ENCODE measurements at regions of chrX and their contacts with region 1.

Region 1: GRCh38 chrX:29090811-29091210 is 503.6 kb downstream of the IL1RAPL1 start:
- DNase-seq: no peak
- H3K4me3 ChIP-seq: no peak overlapping the region
- H3K27ac ChIP-seq: no peak overlapping the region
- H3K4me1 ChIP-seq: no peaks in the 10 kb centered on the region
- H3K27me3 ChIP-seq: no peaks in the 10 kb centered on the region
- CTCF ChIP-seq: no peak

Region 2: DNA sequence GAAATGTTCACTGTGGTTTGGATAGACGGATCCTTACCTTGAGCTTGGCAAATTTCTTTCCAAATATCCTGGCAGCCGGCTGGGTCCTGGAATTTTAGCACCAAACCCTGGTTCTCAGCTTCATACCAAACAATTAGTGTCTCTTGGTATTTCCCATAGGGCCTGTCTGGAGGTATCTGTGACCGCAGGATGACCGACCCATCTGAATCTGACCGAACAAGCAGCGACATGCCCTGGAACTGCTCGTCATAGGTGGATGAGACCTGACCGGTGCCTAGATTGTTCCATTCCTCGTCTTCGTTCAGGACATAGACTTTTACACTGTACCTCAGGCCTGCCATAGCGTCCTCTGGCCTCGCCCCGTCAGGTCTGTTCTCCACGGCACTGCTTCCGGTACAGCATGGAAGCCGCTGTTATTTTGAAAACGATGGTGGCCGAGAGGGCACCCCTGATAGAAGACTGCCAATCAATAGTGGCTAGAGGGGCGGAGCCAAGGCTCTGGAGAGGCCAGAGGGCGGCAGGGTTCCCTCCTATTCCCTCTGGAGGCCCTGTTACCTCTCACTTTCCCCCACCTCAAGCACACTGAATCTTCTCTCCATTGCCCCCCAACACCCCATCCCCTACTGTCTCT is 1627.7 kb before region 1 on chrX and contains the start of gene PPP4R3C:
- CTCF ChIA-PET with region 1: no interaction called
- POLR2A ChIA-PET with region 1: interaction called, 10 read pairs
- intact Hi-C with region 1: no loop called
- DNase-seq: peak in 1 of 2 experiments; percentile 24
- H3K4me3 ChIP-seq: no peak within 1 kb of the TSS
- H3K27ac ChIP-seq: no peak within 1 kb of the TSS
- H3K4me1 ChIP-seq: no peaks in the 10 kb centered on the region
- H3K27me3 ChIP-seq: no peaks in the 10 kb centered on the region
- CTCF ChIP-seq: no peak
- total RNA-seq, gene PPP4R3C: 1.2 and 1.5 TPM in 2 replicates

Region 3: GRCh38 chrX:27966955-27967354 is 1123.9 kb before region 1 on chrX:
- CTCF ChIA-PET with region 1: interaction called, 14 read pairs
- POLR2A ChIA-PET with region 1: no interaction called
- intact Hi-C with region 1: no loop called
- DNase-seq: no peak
- H3K4me3 ChIP-seq: no peak overlapping the region
- H3K27ac ChIP-seq: no peak overlapping the region
- H3K4me1 ChIP-seq: no peaks in the 10 kb centered on the region; the same call in 1 of the 2 replicates
- H3K27me3 ChIP-seq: no peaks in the 10 kb centered on the region
- CTCF ChIP-seq: no peak

Region 4: GRCh38 chrX:29012867-29013266 is 77.9 kb before region 1 on chrX:
- CTCF ChIA-PET with region 1: no interaction called
- POLR2A ChIA-PET with region 1: no interaction called
- intact Hi-C with region 1: no loop called
- DNase-seq: no peak
- H3K4me3 ChIP-seq: no peak overlapping the region
- H3K27ac ChIP-seq: no peak overlapping the region
- H3K4me1 ChIP-seq: no peaks in the 10 kb centered on the region
- H3K27me3 ChIP-seq: no peaks in the 10 kb centered on the region
- CTCF ChIP-seq: no peak